ENCODE measurements at regions of chr3 and their contacts with region 1.

Region 1: DNA sequence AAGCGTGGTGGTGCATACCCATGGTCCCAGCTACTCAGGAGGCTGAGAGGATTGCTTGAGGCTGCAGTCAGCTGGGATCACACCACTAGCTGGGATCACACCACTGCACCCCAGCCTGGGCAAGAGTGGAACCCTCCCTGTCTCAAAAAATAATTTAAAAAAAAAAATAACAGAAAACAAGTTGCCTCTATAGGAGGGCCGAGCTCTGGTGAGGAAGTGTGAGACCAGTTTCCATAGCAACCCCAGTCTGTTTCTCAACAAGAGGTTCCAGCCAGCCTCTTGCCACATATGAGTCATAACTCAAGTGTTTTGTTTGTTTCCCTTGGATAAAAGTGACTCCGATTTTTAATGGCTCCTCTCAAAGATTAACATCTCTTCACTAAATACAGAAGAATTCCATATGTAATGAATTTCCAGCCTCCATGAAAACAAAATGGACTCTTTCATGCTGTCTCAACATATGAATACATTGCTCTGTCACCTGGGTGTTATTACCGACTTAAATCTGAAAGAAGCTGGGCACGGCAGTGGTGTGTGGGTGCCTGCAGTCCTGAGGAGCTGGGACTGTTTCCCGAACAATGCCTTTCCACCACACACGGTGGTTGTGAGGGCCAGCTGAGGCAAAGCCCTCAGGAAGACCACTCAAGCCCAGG is 19.7 kb downstream of the TMEM43 start:
- DNase-seq: peak; percentile 98
- H3K4me3 ChIP-seq: peak overlapping the region; percentile 0; the same call in 1 of the 2 replicates
- CTCF ChIP-seq: no peak

Region 2: DNA sequence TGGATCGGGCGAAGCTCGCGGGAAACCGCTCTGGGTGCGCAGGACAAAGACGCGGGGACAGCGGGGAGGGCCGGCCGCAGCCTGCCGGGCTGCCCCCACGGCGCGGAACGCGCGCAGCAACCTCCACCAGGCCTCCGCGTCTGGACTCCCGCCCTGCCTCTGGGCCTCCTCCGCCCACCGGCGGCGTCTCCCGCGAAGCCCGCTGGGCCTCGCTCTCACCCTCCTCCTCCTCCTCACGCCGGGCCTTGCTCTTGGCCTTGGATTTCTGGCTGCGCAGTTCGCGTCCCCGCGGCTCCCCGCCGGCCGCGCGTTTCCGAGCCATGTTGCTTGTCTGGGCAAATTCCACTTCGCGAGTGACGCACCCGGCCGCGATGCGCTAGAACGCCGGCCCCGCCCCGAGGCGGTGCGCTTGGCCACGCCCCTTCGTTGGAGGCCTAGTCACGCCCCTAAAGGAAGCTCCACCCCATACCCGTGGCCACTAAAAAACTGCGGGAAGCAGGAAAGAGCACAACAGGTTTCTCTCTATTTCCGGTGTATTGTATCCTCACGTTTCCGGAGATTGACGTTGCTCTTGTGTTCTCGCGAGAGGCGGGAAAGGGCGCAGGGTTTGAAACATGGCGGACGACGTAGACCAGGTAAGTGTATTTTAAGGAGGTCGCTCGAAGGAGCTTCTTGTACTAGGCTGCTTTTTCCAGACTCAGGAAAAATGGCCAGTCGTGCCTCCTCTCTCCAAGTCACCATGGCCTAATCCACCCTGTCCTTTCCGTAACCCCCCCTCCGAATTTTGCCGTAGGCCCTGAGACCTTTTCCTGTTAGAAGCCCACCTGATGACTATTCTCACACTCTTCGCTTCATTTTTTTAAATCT is 33.9 kb after region 1 on chr3 and contains the starts of genes LSM3 and XPC:
- CTCF ChIA-PET with region 1: no interaction called
- POLR2A ChIA-PET with region 1: interaction called, 11 read pairs
- DNase-seq: peak; percentile 97
- H3K4me3 ChIP-seq: peak within 1 kb of the TSS; percentile 95
- CTCF ChIP-seq: no peak

Measured in AG04449 (cell line).